ENCODE measurements at regions of chr1 and their contacts with region 1.

Region 1: GRCh38 chr1:201792534-201793305 is 36.2 kb upstream of the IPO9 start:
- DNase-seq: peak; percentile 86 to 90
- ATAC-seq: peak; percentile 93 to 97
- H3K4me3 ChIP-seq: no peak overlapping the region
- H3K27ac ChIP-seq: peak overlapping the region in 1 of 2 experiments; percentile 61; a peak in 3 of 6 replicates
- H3K4me1 ChIP-seq: peaks cover 14% of the 10 kb centered on the region; the same call in 2 of the 3 replicates
- CTCF ChIP-seq: peak; percentile 97
- EP300 ChIP-seq: no peak
- POLR2A ChIP-seq: no peak
- RAD21 ChIP-seq: peak; percentile 99 to 100

Region 2: DNA sequence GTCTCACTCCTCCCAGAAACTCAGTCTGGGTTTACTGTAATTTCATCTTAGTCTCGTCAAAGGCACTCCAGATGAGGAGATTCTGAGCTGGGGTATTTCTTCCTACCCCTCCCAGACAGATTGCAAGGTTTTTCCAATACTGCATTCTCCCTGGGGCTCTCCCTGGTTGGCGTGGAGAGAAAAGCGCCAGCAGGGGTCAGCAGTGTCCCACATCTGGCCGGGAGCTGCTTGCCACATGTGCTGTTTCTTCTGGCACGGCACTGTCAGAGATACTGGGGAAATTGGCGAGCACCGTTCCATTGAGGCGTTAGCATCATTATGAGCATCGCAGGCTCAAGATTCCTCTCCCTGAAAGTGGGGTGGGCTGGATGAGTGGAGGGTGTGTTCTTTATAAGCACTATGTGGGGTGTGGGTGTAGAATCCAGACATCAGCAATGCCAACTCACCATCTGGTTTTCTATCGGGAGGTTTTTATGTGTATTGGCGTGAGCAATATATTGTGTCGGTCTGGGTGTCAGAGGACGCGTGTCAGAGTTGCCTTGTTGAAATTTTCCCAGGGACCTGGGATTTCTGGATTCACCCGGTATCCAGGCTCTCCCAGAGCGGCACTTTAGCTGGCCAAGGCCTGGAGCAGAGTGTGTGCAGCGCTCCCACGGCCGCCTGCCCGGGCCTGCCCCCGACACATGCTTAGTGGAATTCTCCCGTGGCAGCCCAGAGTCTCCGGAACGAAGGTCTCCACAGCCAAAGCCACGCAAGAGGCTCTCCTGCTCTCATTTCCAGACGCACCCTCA is 261.8 kb before region 1 on chr1:
- CTCF ChIA-PET with region 1: interaction called, 155 read pairs
- POLR2A ChIA-PET with region 1: no interaction called
- DNase-seq: peak; percentile 75 to 89
- ATAC-seq: peak; percentile 89 to 94
- H3K4me3 ChIP-seq: no peak overlapping the region
- H3K27ac ChIP-seq: peak overlapping the region in 1 of 2 experiments; percentile 52; a peak in 2 of 6 replicates
- H3K4me1 ChIP-seq: peaks cover 21% of the 10 kb centered on the region
- CTCF ChIP-seq: peak; percentile 90
- EP300 ChIP-seq: no peak
- POLR2A ChIP-seq: no peak
- RAD21 ChIP-seq: peak; percentile 93 to 96

Region 3: DNA sequence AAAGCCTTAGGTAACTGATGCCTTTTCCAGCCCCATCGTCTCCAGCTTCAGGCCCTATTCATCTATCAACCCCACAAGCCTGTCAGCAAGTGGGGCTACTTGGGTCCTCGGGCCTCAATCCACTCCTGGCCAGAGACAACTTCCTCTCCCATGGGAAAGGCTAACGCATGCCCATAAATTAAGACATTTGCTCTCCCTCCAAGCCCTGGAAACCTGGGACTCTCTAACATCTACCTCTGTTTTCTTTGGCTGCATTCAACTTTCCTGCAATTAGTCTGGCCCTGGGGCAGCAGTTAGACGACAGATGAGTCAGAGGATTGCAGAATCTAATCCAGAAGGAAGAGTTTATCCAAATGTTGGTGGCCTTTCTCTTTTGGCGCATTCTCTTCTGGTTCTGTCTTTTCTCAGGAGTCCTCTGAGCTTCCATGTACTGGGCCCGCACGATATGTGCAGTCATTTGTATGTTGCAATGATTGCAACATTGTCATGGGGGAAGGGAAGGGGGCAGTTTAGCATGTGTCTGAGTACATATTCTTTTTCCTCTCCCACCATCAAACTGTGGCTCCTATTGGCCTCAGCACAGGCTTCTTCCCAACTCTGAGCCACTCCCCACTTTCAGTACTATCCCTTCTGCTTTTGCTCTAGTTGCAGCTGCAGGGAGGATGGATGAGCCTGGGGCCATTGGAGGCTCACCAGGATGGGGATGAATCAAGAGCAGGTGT is 199.4 kb before region 1 on chr1:
- CTCF ChIA-PET with region 1: interaction called, 15 read pairs
- POLR2A ChIA-PET with region 1: no interaction called
- DNase-seq: peak; percentile 28 to 75
- ATAC-seq: peak; percentile 66
- H3K4me3 ChIP-seq: no peak overlapping the region
- H3K27ac ChIP-seq: peak overlapping the region; percentile 81 to 90
- H3K4me1 ChIP-seq: peaks cover 62% of the 10 kb centered on the region
- CTCF ChIP-seq: no peak
- EP300 ChIP-seq: peak; percentile 94 to 95; a peak in 4 of 5 replicates
- POLR2A ChIP-seq: no peak
- RAD21 ChIP-seq: peak in 1 of 2 experiments; percentile 43; a peak in 2 of 5 replicates

Region 4: DNA sequence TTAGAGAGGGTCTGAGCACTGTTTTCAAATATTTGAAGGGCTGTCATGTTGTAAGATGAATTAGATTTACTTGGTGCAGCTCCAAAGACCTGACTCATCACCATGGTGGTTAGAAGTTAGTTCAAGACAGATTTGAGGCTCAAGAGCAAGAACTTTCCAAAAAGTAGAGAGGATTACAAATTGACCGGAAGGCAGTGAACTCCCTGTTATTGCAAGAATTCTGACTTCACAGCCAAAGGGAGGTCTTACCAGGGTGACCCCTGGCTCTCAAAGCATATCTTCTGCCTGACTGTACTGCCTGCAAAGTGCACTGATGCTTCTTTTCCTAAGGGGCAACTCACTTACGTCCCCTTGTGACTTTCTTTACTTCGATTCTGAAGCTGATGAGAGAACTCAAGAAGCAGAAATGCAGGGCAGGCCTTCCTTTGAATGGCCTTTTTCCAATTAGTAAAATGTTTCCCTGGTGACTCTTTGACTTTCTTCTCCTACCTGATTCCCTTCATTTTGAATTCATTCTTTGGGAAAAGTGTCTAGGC is 167.4 kb before region 1 on chr1:
- CTCF ChIA-PET with region 1: interaction called, 14 read pairs
- POLR2A ChIA-PET with region 1: no interaction called
- DNase-seq: peak in 1 of 2 experiments; percentile 58
- ATAC-seq: peak; percentile 64 to 77; a peak in 5 of 6 replicates
- H3K4me3 ChIP-seq: no peak overlapping the region
- H3K27ac ChIP-seq: peak overlapping the region; percentile 72 to 79
- H3K4me1 ChIP-seq: peaks cover 37% of the 10 kb centered on the region
- CTCF ChIP-seq: no peak
- EP300 ChIP-seq: peak; percentile 50 to 85; a peak in 2 of 5 replicates
- POLR2A ChIP-seq: no peak
- RAD21 ChIP-seq: peak in 1 of 2 experiments; percentile 32; a peak in 1 of 5 replicates

Region 5: GRCh38 chr1:201732351-201732750 is 60.4 kb before region 1 on chr1:
- CTCF ChIA-PET with region 1: interaction called, 903 read pairs
- POLR2A ChIA-PET with region 1: no interaction called
- DNase-seq: no peak
- ATAC-seq: no peak
- H3K4me3 ChIP-seq: no peak overlapping the region
- H3K27ac ChIP-seq: no peak overlapping the region
- H3K4me1 ChIP-seq: no peaks in the 10 kb centered on the region
- CTCF ChIP-seq: no peak
- EP300 ChIP-seq: no peak
- POLR2A ChIP-seq: no peak
- RAD21 ChIP-seq: no peak

Region 6: DNA sequence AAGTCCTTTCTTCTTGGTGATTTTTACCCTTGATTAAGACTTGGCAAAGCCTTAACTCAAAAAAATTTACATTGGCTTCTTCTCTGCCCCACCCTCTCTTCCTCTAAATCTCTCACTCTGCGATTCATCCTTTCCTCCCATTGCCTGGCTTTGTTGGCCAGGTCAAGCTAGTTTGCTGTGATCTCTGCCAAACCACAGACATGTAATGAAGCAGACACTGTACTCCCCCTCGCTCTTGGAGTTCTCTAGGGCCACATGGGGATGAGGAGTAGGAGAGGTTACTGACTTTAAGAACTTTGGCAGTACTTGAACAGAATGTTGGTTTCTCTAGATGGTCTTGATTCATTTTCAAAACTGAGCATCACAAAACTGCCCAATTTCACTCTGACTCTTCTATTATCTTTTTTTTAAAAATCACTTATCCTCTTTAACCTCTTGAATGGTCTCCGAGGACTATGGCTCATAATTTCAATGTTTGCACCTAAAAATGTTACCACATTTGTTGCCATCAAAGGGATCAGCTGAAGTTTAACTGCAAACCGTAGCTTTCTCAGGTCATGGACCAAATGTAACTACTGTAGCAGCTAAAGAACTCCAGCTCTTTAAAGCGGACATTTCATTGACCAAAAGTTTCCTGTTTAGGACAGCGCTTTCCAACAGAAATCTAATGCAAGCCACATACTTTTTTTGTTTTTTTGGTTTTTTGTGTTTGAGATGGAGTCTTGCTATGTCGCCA is 26.4 kb before region 1 on chr1:
- CTCF ChIA-PET with region 1: interaction called, 11 read pairs
- POLR2A ChIA-PET with region 1: no interaction called
- DNase-seq: no peak
- ATAC-seq: peak in 1 of 2 experiments; percentile 61; a peak in 2 of 6 replicates
- H3K4me3 ChIP-seq: no peak overlapping the region
- H3K27ac ChIP-seq: no peak overlapping the region
- H3K4me1 ChIP-seq: 0 out of 3 replicates have a peak, but pooled peaks cover 4% of the 10 kb centered on the region
- CTCF ChIP-seq: no peak
- EP300 ChIP-seq: no peak
- POLR2A ChIP-seq: no peak
- RAD21 ChIP-seq: no peak